ENCODE measurements at regions of chr18 and their contacts with region 1.

Region 1: GRCh38 chr18:48326901-48327675 is 82.1 kb downstream of the ZBTB7C start:
- DNase-seq: peak; percentile 65
- H3K4me3 Mint-ChIP-seq: no peak overlapping the region
- H3K27ac Mint-ChIP-seq: peak overlapping the region; percentile 68
- H3K4me1 Mint-ChIP-seq: peaks cover 48% of the 10 kb centered on the region
- H3K27me3 Mint-ChIP-seq: no peaks in the 10 kb centered on the region
- CTCF ChIP-seq: no peak

Region 2: DNA sequence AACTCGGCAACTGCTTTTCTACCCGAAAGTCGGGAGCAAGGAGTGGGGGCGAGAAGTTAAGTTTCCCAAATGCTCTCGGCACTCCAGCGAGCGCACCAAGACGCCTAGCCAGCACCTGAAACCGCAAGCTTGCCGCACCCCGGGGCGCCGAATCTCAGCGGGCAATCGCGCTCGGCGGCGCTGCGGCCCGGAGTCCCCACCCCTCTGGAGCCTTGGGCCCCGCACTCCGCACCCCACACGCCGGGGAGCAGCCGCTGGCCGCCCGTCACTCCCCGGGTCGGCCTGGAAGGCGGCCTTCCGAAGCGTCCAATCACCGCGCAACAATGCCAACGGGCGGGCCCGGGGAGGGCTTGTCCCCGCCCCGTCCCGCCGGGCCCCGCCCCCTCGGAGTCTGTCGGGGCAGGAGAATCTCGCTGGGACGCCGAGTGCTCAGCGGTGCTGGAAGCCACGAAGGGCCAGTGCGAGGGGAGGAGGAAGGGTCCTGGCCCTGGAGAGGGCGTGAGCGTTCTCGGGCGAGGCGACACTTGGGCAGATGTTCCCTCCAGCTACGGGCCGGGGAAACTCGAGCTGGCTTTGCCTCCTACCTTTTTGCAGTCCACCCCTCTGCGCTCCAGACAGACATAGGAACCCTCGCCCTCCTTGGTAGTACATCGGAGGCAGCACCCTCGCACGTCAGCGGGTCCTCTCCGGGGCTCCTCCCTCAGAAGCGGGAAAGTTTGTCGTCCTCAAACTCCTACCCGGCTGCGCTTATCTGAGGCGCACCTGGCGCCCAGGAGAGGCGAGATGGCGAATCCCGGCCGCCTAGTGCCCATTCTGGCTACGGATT is 83.2 kb after region 1 on chr18:
- CTCF ChIA-PET with region 1: interaction called, 4 read pairs
- POLR2A ChIA-PET with region 1: interaction called, 4 read pairs
- intact Hi-C with region 1: loop called (anchors 5 kb)
- DNase-seq: peak; percentile 92
- H3K4me3 Mint-ChIP-seq: peak overlapping the region; percentile 75
- H3K27ac Mint-ChIP-seq: no peak overlapping the region
- H3K4me1 Mint-ChIP-seq: peaks cover 2% of the 10 kb centered on the region
- H3K27me3 Mint-ChIP-seq: no peaks in the 10 kb centered on the region
- CTCF ChIP-seq: no peak

Measured in MCF 10A (cell line).